AG04449 (cell line): ENCODE measurements at regions of chr17 and their contacts with region 1.

Region 1: GRCh38 chr17:48335858-48336500 is 94.0 kb downstream of the SKAP1 start:
- DNase-seq: no peak
- H3K4me3 ChIP-seq: no peak overlapping the region
- CTCF ChIP-seq: peak; percentile 38

Region 2: GRCh38 chr17:48181653-48182052 is 154.3 kb before region 1 on chr17:
- CTCF ChIA-PET with region 1: no interaction called
- POLR2A ChIA-PET with region 1: no interaction called
- DNase-seq: no peak
- H3K4me3 ChIP-seq: no peak overlapping the region
- CTCF ChIP-seq: peak; percentile 57

Region 3: GRCh38 chr17:48215583-48216139 is 120.3 kb before region 1 on chr17:
- CTCF ChIA-PET with region 1: interaction called, 18 read pairs
- POLR2A ChIA-PET with region 1: no interaction called
- DNase-seq: no peak
- H3K4me3 ChIP-seq: no peak overlapping the region
- CTCF ChIP-seq: peak; percentile 57

Region 4: DNA sequence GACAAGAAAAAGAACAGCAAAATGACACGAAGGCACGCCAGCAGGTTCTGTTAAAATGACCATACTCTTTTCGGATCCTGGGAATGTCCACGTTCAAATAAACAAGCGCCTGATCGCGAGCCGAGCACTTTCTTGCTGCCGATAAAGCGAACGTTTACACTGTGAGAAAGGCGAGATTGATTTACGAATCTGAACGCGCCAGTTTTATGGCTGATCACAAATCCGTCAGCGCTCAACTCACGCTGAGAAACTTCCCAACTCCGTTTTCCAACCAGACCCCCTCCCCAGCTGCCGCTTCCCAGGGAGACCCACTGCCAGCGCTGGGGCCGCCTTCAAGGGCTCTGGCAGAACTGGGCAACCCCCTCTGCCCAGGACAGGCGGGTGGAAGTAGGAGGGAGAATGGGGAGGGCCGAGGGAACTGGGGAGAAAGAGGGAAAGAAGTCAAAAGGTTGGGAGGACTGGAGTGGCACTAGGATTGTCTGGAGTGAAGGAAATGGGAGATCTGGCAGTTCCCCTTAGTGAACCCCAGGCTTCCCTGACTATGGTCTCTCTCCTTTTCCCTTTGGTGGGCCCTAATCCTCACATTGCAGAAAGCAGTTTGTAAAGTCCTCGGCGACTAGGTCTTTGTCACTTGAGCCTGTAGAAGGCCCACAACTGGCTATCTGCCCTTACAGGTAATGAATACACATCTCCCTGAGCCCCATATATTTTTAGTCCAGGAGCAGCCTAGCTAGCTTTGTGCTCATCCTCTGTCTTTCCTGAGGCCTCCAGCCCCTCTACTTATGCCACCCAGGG is 235.2 kb after region 1 on chr17:
- CTCF ChIA-PET with region 1: interaction called, 10 read pairs
- POLR2A ChIA-PET with region 1: no interaction called
- DNase-seq: no peak
- H3K4me3 ChIP-seq: peak overlapping the region; percentile 54
- CTCF ChIP-seq: no peak

Region 5: GRCh38 chr17:48601539-48602425 is 265.8 kb after region 1 on chr17:
- CTCF ChIA-PET with region 1: interaction called, 14 read pairs
- POLR2A ChIA-PET with region 1: no interaction called
- DNase-seq: no peak
- H3K4me3 ChIP-seq: peak overlapping the region; percentile 68
- CTCF ChIP-seq: no peak

Region 6: GRCh38 chr17:48618256-48618897 is 282.4 kb after region 1 on chr17:
- CTCF ChIA-PET with region 1: interaction called, 185 read pairs
- POLR2A ChIA-PET with region 1: no interaction called
- DNase-seq: no peak
- H3K4me3 ChIP-seq: peak overlapping the region; percentile 29
- CTCF ChIP-seq: peak; percentile 88